ENCODE measurements at regions of chr6 and their contacts with region 1.

Region 1: DNA sequence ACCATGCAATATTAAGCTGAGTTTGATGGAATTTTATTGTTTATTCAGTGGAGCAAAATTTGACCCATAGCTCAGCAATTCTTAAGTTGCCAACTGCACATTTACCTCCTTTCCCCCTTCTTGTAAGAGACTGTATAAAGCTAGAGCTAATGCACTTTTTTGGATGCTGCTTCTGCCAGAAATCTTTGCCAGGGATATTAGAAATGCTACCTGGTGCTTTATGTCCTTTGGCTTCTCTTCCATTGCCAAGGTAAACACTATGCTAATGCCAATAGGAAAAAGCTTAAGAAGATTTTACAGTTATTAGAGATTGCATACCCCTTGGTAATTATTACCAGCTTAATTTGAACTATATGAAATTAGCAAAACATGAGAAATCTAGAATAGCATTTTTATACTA is 79.0 kb upstream of the OGFRL1 start:
- DNase-seq: no peak
- ATAC-seq: no peak
- H3K4me3 ChIP-seq: no peak overlapping the region
- H3K27ac ChIP-seq: no peak overlapping the region
- H3K4me1 ChIP-seq: no peaks in the 10 kb centered on the region
- H3K27me3 ChIP-seq: no peaks in the 10 kb centered on the region
- CTCF ChIP-seq: no peak
- POLR2A ChIP-seq: no peak

Region 2: DNA sequence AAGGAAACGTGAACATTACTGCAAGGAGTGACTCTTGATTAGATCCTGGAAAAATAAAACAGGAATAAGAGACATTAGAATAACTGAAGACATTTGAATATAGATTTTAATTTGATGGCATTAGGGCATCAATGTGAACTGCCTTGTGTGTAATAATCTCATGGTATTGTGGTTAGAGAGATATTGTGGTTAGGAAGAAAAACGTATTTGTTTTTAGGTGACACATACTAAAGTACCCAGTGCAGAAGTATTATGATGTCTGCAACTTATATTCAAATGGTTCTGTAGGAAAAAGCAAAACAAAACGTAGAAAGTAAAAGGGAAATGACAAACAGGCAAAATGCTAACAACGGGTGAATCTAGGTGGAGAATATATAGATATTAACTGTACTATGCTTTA is 13.0 kb after region 1 on chr6:
- in situ Hi-C with region 1: no loop called
- intact Hi-C with region 1: loop called (anchors 2 kb)
- DNase-seq: no peak
- ATAC-seq: no peak
- H3K4me3 ChIP-seq: no peak overlapping the region
- H3K27ac ChIP-seq: no peak overlapping the region
- H3K4me1 ChIP-seq: no peaks in the 10 kb centered on the region
- H3K27me3 ChIP-seq: no peaks in the 10 kb centered on the region
- CTCF ChIP-seq: no peak
- POLR2A ChIP-seq: no peak

Region 3: GRCh38 chr6:71567562-71567961 is 357.9 kb after region 1 on chr6:
- in situ Hi-C with region 1: no loop called
- intact Hi-C with region 1: no loop called
- DNase-seq: no peak
- ATAC-seq: no peak
- H3K4me3 ChIP-seq: no peak overlapping the region
- H3K27ac ChIP-seq: no peak overlapping the region
- H3K4me1 ChIP-seq: no peaks in the 10 kb centered on the region
- H3K27me3 ChIP-seq: no peaks in the 10 kb centered on the region
- CTCF ChIP-seq: no peak
- POLR2A ChIP-seq: no peak

Measured in gastrocnemius medialis (tissue), 4 donors.